Posterior cingulate gyrus (tissue), 11 donors: ENCODE measurements at regions of chr2 and their contacts with region 1.

Region 1: DNA sequence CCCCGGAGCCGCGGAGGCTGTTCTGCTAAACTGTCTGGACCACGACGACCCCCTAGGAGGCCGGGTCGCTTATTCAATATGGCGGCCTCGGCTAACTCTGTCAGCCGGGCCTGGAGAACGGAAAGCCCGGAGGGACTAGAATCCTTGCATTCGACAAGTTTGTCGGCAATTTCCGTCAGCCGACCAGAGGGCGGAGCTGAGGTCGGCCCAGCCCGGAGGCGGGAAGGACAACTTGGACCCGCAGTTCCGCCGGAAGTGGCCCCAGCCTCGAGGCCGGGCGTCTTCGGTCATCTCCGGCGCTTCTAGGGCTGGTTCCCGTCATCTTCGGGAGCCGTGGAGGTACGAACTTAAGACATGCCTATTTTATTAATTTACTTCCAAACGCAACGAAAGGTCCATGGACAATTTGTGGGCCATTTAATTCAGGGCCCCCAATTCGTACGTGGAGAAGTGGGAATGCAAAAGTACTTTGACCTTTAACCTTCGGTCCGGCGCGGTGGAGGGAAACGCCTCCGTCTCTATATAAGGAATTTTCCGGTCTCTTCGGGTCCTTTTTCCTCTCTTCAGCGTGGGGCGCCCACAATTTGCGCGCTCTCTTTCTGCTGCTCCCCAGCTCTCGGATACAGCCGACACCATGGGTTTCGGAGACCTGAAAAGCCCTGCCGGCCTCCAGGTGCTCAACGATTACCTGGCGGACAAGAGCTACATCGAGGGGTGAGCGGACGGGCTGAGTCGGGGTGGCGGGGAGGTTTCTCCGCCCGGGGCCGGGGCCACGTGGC is at the starts of genes EEF1B2 and NDUFS1:
- DNase-seq: peak; percentile 97 to 100 (median 99)

Region 2: DNA sequence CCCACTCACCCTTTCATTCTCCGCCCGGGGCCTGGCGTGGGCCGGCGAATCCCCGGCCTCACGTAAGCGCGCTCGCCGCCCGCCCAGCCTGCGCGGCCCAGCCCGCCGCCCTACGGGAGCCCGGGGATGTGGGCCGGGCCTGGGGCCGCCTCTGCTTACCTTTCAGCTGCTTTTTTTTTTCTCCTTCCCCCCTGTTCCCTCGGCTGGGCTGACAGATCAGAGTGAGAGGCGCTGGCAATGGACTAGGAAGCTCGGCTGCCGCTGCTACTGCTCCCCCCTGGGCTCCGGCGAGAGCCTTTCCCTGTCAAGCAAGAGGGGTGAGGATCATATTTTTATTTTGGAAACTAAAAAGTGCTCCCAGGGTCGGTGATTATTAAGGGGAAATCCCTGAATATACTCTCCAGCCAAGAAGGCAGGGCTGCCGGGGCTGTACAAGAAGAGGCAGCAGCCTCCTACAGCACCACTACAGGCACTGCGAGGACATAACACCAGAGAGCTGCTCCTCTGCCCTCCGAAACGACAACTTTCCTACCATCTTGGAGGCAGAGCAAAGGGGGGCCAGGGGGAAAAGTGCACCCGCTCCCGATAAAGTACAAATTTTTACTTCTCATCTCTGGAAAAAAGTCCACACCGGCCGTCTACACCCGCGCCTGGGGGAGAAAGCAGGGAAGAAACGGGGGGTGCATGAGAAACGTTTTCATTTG is 73.6 kb before region 1 on chr2 and contains the start of gene INO80D:
- intact Hi-C with region 1: loop called (anchors 1 kb)
- DNase-seq: peak; percentile 57 to 95 (median 71)

Region 3: GRCh38 chr2:206274434-206275268 is 115.1 kb after region 1 on chr2 and contains the start of gene ZDBF2:
- intact Hi-C with region 1: loop called (anchors 5 kb)
- DNase-seq: peak in 9 of 10 donors; percentile 15 to 92 (median 26)

Region 4: DNA sequence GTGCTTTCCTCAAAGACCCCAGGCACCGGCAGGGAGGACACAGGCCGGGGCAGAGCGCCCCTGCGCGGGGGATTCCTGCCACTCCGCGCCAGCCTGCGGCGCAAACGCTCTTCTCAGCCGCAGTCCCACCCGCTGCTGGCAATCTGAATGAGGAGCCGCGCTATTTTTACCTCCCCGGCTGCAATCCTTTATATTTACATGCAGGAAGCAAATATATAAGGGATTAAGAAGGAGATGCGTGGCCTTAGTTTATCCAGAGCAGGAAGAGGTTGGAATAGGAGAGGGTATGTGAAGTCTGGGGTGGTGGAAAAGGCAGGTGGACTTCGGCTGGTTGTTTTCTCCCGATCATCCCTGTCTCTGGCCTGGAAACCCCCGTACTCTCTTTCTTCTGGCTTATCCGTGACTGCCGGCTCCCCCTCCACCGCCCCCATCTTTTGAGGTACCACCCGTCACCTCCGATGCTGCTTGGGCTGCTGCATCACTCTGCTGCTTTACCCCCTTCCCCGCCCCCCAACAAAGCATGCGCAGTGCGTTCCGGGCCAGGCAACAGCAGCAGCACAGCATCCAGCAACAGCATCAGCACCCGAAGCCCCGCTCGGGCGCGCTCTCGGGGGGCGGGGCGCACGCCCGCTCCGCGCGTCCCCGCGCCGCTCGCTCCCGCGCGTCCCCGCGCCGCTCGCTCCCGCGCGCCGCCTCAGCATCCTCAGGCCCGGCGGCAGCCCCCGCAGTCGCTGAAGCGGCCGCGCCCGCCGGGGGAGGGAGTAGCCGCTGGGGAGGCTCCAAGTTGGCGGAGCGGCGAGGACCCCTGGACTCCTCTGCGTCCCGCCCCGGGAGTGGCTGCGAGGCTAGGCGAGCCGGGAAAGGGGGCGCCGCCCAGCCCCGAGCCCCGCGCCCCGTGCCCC is 283.5 kb after region 1 on chr2 and contains the start of gene ADAM23:
- intact Hi-C with region 1: loop called (anchors 2 kb)
- DNase-seq: peak; percentile 86 to 99 (median 92)

Region 5: DNA sequence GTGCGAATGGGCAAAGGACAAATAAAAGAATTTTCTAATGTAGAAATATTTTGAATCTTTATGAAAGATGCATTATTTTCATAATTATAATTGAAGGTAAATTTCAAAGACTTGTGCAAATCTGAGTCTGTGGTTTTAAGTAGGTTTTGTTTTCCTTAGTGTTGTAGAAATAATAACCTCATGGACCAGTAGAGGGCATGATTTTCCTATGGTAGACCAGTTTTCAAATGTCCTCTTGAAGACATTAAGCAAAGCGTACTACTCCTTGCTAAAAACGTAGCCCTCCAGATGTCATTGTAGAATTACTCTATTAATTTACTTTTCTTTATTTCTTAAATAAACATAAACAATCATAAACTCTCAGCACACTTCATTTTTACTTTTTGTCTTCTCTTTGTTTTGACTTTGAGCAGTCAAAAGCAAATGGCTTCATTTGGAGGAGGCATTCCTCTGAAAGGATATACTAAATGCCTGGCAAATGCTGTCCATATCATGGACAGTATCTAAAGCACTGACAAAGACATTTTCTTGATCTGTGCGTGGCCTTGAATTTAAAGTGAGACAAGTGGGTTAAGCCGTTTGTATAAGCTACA is 396.9 kb after region 1 on chr2:
- intact Hi-C with region 1: loop called (anchors 5 kb)
- DNase-seq: no peak